Esophagus squamous epithelium (tissue), 5 donors: ENCODE measurements at regions of chr9 and their contacts with region 1.

Region 1: GRCh38 chr9:124708633-124709291 is 62.3 kb downstream of the NR6A1 start:
- DNase-seq: no peak
- H3K4me3 ChIP-seq: no peak overlapping the region
- H3K27ac ChIP-seq: peak overlapping the region in 1 of 4 donors; percentile 17
- H3K4me1 ChIP-seq: peaks cover 0 to 30% (median 0%) of the 10 kb centered on the region in 3 donors
- H3K27me3 ChIP-seq: no peaks in the 10 kb centered on the region
- CTCF ChIP-seq: no peak
- POLR2A ChIP-seq: no peak

Region 2: DNA sequence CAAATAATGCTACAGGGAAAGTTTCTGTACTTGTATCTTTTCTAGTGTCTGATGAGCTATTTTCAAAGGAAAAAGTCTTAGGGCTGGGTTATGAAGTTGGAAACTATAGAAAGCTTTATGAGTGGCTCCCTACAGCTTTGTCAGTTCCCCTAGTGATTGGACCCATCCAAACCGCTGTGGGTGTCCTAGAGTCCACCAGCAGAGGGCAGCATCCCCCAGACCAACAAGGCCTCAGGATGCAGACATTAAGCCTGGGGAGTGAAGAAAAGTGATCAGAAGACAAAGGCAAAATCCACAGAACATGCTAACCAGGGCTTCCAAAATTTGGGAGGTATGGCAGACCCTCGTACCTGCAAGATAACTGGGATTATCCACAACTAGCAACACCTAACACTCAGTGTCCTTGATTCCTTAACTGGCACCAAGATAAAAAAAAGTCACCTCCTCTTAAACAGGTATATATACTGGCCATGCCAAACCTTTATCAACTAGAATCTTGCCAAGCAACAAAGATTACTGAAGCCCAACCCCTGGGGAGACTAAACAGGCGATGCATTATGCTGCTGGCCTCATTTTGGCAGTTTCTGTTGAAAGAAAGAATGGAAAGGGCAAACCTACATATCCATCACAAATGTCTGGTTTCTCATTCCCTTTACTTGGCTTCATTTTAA is 91.2 kb before region 1 on chr9:
- intact Hi-C with region 1: loop called (anchors 2 kb)
- DNase-seq: no peak
- H3K4me3 ChIP-seq: no peak overlapping the region
- H3K27ac ChIP-seq: no peak overlapping the region
- H3K4me1 ChIP-seq: peaks cover 0 to 5% (median 0%) of the 10 kb centered on the region in 3 donors
- H3K27me3 ChIP-seq: no peaks in the 10 kb centered on the region
- CTCF ChIP-seq: peak; percentile 40 to 90 (median 86)
- POLR2A ChIP-seq: no peak